ENCODE measurements at regions of chr19 and their contacts with region 1.

Region 1: DNA sequence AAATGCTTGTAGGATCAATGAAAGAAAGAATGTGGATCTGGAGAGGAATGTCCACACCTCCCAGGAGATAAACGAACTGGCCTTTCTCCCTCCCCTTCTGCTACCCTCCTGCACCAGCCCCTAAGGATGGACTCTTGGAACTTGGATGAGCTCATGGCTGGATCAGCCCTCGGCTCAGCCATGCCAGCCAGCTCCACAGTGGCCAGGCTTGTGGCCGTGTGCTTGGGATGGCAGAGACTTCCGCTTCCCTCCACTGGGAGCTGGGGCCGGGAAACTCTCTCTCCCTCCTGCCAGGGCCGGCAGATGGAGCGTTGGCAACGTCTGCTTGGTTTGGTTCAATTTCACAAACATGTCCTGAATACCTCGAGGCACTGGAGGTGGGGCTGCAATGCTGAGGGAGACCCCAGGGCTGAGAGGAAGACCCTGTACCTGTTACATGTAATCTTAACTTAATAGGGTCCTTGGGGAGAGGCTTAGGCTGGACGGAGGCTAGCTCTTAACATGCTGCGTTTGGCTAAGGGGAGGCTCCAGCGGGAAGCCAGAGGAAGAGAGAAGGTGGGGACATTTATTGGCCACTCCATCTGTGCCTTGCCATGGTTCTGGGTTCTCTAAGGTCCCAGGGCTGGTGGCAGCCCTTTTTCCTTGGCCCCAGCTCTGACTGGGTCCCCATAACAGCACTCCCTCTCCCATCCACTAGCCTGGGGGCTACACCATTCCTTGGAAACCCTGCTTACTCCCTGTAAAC is 152.5 kb downstream of the IER2 start:
- DNase-seq: peak; percentile 25
- ATAC-seq: peak; percentile 76
- H3K4me3 ChIP-seq: no peak overlapping the region
- H3K27ac ChIP-seq: no peak overlapping the region
- H3K4me1 ChIP-seq: no peaks in the 10 kb centered on the region
- H3K27me3 ChIP-seq: peaks cover 52% of the 10 kb centered on the region
- CTCF ChIP-seq: no peak

Region 2: GRCh38 chr19:13291759-13292312 is 10.9 kb before region 1 on chr19:
- CTCF ChIA-PET with region 1: no interaction called
- POLR2A ChIA-PET with region 1: interaction called, 10 read pairs
- intact Hi-C with region 1: no loop called
- DNase-seq: no peak
- ATAC-seq: no peak
- H3K4me3 ChIP-seq: no peak overlapping the region
- H3K27ac ChIP-seq: no peak overlapping the region
- H3K4me1 ChIP-seq: no peaks in the 10 kb centered on the region
- H3K27me3 ChIP-seq: 0 out of 2 replicates have a peak, but pooled peaks cover 4% of the 10 kb centered on the region
- CTCF ChIP-seq: no peak